ENCODE measurements at regions of chr1 and their contacts with region 1.

Region 1: GRCh38 chr1:10179406-10180091 is 30.8 kb upstream of the KIF1B start:
- DNase-seq: no peak
- H3K4me3 ChIP-seq: no peak overlapping the region
- H3K27ac ChIP-seq: no peak overlapping the region
- H3K4me1 ChIP-seq: no peaks in the 10 kb centered on the region
- H3K27me3 ChIP-seq: no peaks in the 10 kb centered on the region
- CTCF ChIP-seq: no peak
- POLR2A ChIP-seq: no peak

Region 2: GRCh38 chr1:10042766-10043165 is 136.8 kb before region 1 on chr1:
- intact Hi-C with region 1: loop called (anchors 5 kb)
- DNase-seq: no peak
- H3K4me3 ChIP-seq: no peak overlapping the region
- H3K27ac ChIP-seq: no peak overlapping the region
- H3K4me1 ChIP-seq: peaks cover 57% of the 10 kb centered on the region
- H3K27me3 ChIP-seq: no peaks in the 10 kb centered on the region
- CTCF ChIP-seq: no peak
- POLR2A ChIP-seq: no peak

Region 3: GRCh38 chr1:10117865-10118264 is 61.7 kb before region 1 on chr1:
- intact Hi-C with region 1: no loop called
- DNase-seq: no peak
- H3K4me3 ChIP-seq: no peak overlapping the region
- H3K27ac ChIP-seq: no peak overlapping the region
- H3K4me1 ChIP-seq: no peaks in the 10 kb centered on the region
- H3K27me3 ChIP-seq: no peaks in the 10 kb centered on the region
- CTCF ChIP-seq: no peak
- POLR2A ChIP-seq: no peak